Vagina (tissue), 2 donors: ENCODE measurements at regions of chr7 and their contacts with region 1.

Region 1: DNA sequence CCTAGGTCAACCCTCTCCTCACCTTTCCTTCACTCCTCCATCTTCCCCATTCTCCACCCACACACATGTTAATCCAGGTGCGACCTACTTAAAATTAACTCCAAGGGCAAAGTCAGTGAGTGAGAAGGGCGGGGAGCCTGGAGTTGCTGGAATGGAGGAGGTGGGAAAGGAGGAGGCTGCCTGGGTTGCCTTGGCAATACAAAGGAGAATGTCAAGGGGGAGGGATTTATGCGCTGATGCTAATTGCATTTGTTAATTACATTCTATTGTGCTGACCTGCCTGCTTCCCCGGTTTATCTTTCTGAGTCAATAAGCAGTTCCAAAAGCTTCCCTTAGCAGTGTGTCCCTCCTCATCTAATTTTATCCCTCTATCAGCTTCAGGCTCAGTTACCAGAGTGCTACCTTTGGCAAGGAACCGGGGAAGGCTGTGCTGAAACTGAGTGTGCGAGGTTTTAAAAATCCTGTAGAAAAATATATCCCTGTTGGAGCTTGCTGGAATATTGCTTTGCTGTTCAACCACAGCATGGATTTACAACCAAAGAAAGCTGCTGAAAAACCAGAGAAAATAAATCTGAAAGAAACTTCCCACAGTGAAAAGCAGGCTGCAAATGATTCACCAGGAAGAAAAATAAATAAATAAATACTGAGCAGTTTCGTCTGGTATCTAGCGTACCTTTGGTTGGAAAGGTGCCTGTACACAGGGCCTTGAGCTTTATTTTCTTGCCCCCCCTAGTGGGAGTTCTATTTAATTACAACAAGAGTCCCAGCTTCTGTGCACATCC is 113.2 kb upstream of the DGKB start:
- DNase-seq: no peak
- H3K4me3 ChIP-seq: no peak overlapping the region
- H3K27ac ChIP-seq: no peak overlapping the region
- H3K4me1 ChIP-seq: peaks cover 17% of the 10 kb centered on the region
- H3K27me3 ChIP-seq: no peaks in the 10 kb centered on the region
- CTCF ChIP-seq: peak in 2 of 3 experiments; percentile 50 to 68
- POLR2A ChIP-seq: no peak

Region 2: GRCh38 chr7:14720785-14721184 is 295.0 kb before region 1 on chr7:
- intact Hi-C with region 1: loop called (anchors 10 kb)
- DNase-seq: no peak
- H3K4me3 ChIP-seq: no peak overlapping the region
- H3K27ac ChIP-seq: no peak overlapping the region
- H3K4me1 ChIP-seq: no peaks in the 10 kb centered on the region
- H3K27me3 ChIP-seq: no peaks in the 10 kb centered on the region
- CTCF ChIP-seq: no peak
- POLR2A ChIP-seq: no peak

Region 3: DNA sequence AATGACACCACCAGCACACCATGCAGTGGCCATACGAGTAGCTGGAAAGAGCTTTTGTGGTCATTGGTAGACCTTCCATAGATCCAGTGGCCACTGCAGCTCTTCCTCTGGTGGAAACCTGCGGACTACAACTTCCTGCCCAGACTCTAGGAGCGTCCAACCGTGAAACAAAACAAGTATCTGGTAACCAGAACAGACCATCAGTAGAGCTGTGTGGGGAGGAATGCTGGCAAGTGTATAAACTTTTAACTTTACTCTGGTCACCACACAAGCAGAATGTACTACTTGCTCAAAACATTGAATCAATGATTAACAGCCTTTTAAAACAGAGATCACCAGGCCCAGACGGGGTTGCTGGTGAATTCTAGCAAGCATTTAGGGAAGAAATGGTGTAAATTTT is 41.5 kb after region 1 on chr7:
- intact Hi-C with region 1: no loop called
- DNase-seq: no peak
- H3K4me3 ChIP-seq: no peak overlapping the region
- H3K27ac ChIP-seq: no peak overlapping the region
- H3K4me1 ChIP-seq: no peaks in the 10 kb centered on the region
- H3K27me3 ChIP-seq: no peaks in the 10 kb centered on the region
- CTCF ChIP-seq: no peak
- POLR2A ChIP-seq: no peak